Activated T-helper 1 cell treated with anti-CD3 and anti-CD28 coated beads, Interleukin-12 subunit alpha, Interleukin-12 subunit beta, Interleukin-2, Interleukin-4 antibody, amounts not matched to agents 30 ng/mL and 10 ng/mL and 1 ng/mL, durations not matched to agents 14 hours and 24 hours and 36 hours (primary cell): ENCODE measurements at regions of chr3 and their contacts with region 1.

Region 1: GRCh38 chr3:108124337-108125152 is 33.7 kb upstream of the CD47 start:
- DNase-seq: peak; percentile 67
- H3K4me3 Mint-ChIP-seq: peak overlapping the region; percentile 89
- H3K27ac Mint-ChIP-seq: peak overlapping the region; percentile 96
- H3K4me1 Mint-ChIP-seq: peaks cover 59% of the 10 kb centered on the region
- H3K27me3 Mint-ChIP-seq: peaks cover 2% of the 10 kb centered on the region

Region 2: GRCh38 chr3:107522510-107523288 is 601.8 kb before region 1 on chr3 and contains the start of gene BBX:
- intact Hi-C with region 1: loop called (anchors 10 kb)
- DNase-seq: peak; percentile 88
- H3K4me3 Mint-ChIP-seq: peak within 1 kb of the TSS; percentile 92
- H3K27ac Mint-ChIP-seq: peak within 1 kb of the TSS; percentile 96
- H3K4me1 Mint-ChIP-seq: peaks cover 32% of the 10 kb centered on the region
- H3K27me3 Mint-ChIP-seq: peaks cover 4% of the 10 kb centered on the region
- total RNA-seq, gene BBX: 38.1 and 45.1 TPM in 2 replicates

Region 3: DNA sequence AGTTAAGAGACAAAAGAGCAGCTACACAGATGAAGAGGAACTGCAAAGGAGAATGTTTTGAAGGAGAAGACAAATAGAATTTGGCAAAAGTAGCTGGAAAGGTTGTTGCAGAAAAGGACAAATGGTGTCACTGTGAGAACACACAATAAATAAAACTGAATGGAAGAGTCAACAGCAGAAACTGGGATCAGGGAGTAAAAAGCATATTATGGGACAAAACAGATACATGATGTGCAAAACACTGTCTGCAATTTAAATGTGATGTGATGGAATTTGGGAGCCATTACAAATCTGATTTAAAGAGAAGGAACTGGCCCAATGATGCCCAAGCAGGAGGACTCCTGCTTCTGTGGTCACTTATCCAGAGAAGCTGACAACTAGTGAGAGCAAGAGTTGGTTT is 79.8 kb before region 1 on chr3:
- intact Hi-C with region 1: loop called (anchors 5 kb)
- DNase-seq: no peak
- H3K4me3 Mint-ChIP-seq: no peak overlapping the region
- H3K27ac Mint-ChIP-seq: no peak overlapping the region
- H3K4me1 Mint-ChIP-seq: peaks cover 12% of the 10 kb centered on the region
- H3K27me3 Mint-ChIP-seq: no peaks in the 10 kb centered on the region

Region 4: GRCh38 chr3:108100906-108101660 is 23.5 kb before region 1 on chr3:
- intact Hi-C with region 1: loop called (anchors 1 kb)
- DNase-seq: peak; percentile 32
- H3K4me3 Mint-ChIP-seq: peak overlapping the region; percentile 1
- H3K27ac Mint-ChIP-seq: peak overlapping the region; percentile 77
- H3K4me1 Mint-ChIP-seq: peaks cover 29% of the 10 kb centered on the region
- H3K27me3 Mint-ChIP-seq: peaks cover 13% of the 10 kb centered on the region

Region 5: GRCh38 chr3:108292905-108293328 is 168.4 kb after region 1 on chr3:
- intact Hi-C with region 1: loop called (anchors 1 kb)
- DNase-seq: no peak
- H3K4me3 Mint-ChIP-seq: peak overlapping the region; percentile 53
- H3K27ac Mint-ChIP-seq: peak overlapping the region; percentile 83
- H3K4me1 Mint-ChIP-seq: peaks cover 64% of the 10 kb centered on the region
- H3K27me3 Mint-ChIP-seq: peaks cover 2% of the 10 kb centered on the region

Region 6: GRCh38 chr3:108342837-108343478 is 218.4 kb after region 1 on chr3:
- intact Hi-C with region 1: loop called (anchors 1 kb)
- DNase-seq: no peak
- H3K4me3 Mint-ChIP-seq: peak overlapping the region; percentile 5
- H3K27ac Mint-ChIP-seq: peak overlapping the region; percentile 59
- H3K4me1 Mint-ChIP-seq: peaks cover 37% of the 10 kb centered on the region
- H3K27me3 Mint-ChIP-seq: peaks cover 4% of the 10 kb centered on the region